Right lobe of liver (tissue), 6 donors: ENCODE measurements at regions of chr17 and their contacts with region 1.

Region 1: DNA sequence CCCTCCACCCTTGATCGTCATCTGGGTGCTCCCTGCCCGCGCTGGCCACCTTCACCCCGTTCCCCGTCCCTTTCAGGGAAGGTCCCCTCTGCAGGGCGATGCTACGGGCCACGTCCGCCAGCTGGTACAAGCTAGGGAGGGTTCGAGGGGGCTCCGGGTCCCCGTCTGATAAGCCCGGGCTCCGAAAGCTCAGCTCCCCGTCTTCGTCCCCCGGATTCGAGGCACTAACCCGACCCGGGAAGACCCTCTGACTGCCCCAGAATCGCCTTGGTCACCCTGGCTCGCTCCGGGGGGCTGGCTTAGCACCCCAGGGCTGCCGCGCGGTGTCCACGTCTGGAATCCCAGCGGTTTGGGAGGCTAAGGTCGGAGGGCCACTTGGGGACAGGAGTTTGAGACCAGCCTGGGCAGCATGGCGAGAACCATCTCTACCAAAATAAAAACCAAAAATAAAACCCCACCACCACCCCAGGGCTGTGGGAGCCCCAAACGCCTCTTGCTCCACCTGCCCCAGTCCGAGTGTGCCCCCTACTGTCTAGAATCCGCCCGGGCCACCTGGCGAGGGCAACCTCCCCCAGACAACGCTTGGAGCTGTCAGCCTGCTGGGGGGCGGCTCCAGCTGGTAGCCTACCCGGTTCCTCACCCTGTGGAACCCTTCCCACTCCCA is 1.1 kb upstream of the SLC43A2 start:
- DNase-seq: peak; percentile 73 to 85 (median 81)
- ATAC-seq: peak; percentile 50 to 65 (median 62)
- H3K4me3 ChIP-seq: peak overlapping the region; percentile 54 to 63 (median 54)
- H3K27ac ChIP-seq: peak overlapping the region; percentile 56 to 83 (median 77)
- H3K4me1 ChIP-seq: peaks cover 0 to 14% (median 0%) of the 10 kb centered on the region in 4 donors
- H3K27me3 ChIP-seq: no peaks in the 10 kb centered on the region
- CTCF ChIP-seq: peak; percentile 60 to 80 (median 68)
- POLR2A ChIP-seq: no peak

Region 2: GRCh38 chr17:1573916-1574696 is 55.7 kb before region 1 on chr17:
- intact Hi-C with region 1: loop called (anchors 5 kb)
- DNase-seq: peak; percentile 87 to 90 (median 88)
- ATAC-seq: peak; percentile 65 to 76 (median 70)
- H3K4me3 ChIP-seq: no peak overlapping the region
- H3K27ac ChIP-seq: no peak overlapping the region
- H3K4me1 ChIP-seq: peaks cover 0 to 24% (median 9%) of the 10 kb centered on the region in 4 donors
- H3K27me3 ChIP-seq: no peaks in the 10 kb centered on the region
- CTCF ChIP-seq: peak; percentile 97 to 98 (median 98)
- POLR2A ChIP-seq: no peak

Region 3: GRCh38 chr17:1703063-1703462 is 73.3 kb after region 1 on chr17:
- intact Hi-C with region 1: no loop called
- DNase-seq: no peak
- ATAC-seq: no peak
- H3K4me3 ChIP-seq: no peak overlapping the region
- H3K27ac ChIP-seq: no peak overlapping the region
- H3K4me1 ChIP-seq: no peaks in the 10 kb centered on the region
- H3K27me3 ChIP-seq: no peaks in the 10 kb centered on the region
- CTCF ChIP-seq: no peak
- POLR2A ChIP-seq: no peak